Thyroid gland (tissue), 4 donors: ENCODE measurements at regions of chr12 and their contacts with region 1.

Region 1: GRCh38 chr12:70576346-70577282 is 60.6 kb downstream of the PTPRB start:
- DNase-seq: no peak
- H3K4me3 ChIP-seq: no peak overlapping the region
- H3K27ac ChIP-seq: no peak overlapping the region
- H3K4me1 ChIP-seq: no peaks in the 10 kb centered on the region
- H3K27me3 ChIP-seq: no peaks in the 10 kb centered on the region
- CTCF ChIP-seq: peak; percentile 39 to 74 (median 60)
- POLR2A ChIP-seq: no peak

Region 2: GRCh38 chr12:69880571-69880970 is 696.0 kb before region 1 on chr12:
- intact Hi-C with region 1: loop called (anchors 5 kb)
- DNase-seq: no peak
- H3K4me3 ChIP-seq: no peak overlapping the region
- H3K27ac ChIP-seq: no peak overlapping the region
- H3K4me1 ChIP-seq: peaks cover 7 to 18% of the 10 kb centered on the region in 2 donors
- H3K27me3 ChIP-seq: no peaks in the 10 kb centered on the region
- CTCF ChIP-seq: no peak
- POLR2A ChIP-seq: no peak

Region 3: DNA sequence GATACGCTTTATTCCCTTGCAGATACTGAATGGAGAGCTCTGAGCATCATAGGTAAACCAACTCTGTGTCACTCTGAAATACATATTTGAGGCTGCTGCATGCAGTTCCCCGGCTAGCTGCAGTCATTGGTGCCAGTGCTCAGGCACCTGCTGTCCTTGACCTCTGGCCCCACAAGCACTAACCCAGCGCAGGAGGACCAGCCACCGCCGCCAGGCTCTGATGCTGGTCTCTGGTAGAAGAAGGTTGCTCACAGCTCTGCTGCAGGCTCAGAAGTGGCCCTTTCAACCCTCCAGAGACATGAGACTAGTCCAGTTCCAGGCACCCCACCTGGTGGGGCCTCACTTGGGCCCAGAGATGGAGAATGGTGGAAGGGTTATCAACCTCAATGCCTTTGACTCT is 95.1 kb after region 1 on chr12:
- intact Hi-C with region 1: no loop called
- DNase-seq: no peak
- H3K4me3 ChIP-seq: no peak overlapping the region
- H3K27ac ChIP-seq: no peak overlapping the region
- H3K4me1 ChIP-seq: no peaks in the 10 kb centered on the region
- H3K27me3 ChIP-seq: no peaks in the 10 kb centered on the region
- CTCF ChIP-seq: no peak
- POLR2A ChIP-seq: no peak